T-cell (primary cell): ENCODE measurements at regions of chr2 and their contacts with region 1.

Region 1: DNA sequence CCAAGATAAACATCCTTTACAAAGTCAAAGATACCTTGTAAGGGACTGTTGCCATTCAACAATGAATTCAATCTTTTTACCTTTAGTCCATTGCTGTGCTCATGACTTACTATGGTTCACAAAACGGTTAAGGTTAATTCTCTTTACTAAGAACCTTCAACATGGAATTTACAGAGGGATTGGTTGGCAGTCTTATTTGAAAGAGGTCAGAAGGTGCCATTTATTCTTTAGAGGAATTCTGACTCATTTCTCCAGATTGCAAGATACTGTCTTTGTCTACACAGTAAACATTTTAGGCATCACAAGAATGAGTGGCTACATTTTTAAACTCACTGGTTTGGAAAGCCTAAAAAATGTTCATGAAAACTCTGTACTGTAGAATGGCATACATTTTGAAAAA is 17.4 kb downstream of the KCNH7 start:
- DNase-seq: no peak
- ATAC-seq: no peak
- H3K4me3 ChIP-seq: no peak overlapping the region
- H3K4me3 Mint-ChIP-seq: no peak overlapping the region
- H3K27ac ChIP-seq: no peak overlapping the region
- H3K27ac Mint-ChIP-seq: no peak overlapping the region
- H3K4me1 ChIP-seq: no peaks in the 10 kb centered on the region
- H3K4me1 Mint-ChIP-seq: no peaks in the 10 kb centered on the region
- H3K27me3 ChIP-seq: no peaks in the 10 kb centered on the region
- H3K27me3 Mint-ChIP-seq: no peaks in the 10 kb centered on the region

Region 2: DNA sequence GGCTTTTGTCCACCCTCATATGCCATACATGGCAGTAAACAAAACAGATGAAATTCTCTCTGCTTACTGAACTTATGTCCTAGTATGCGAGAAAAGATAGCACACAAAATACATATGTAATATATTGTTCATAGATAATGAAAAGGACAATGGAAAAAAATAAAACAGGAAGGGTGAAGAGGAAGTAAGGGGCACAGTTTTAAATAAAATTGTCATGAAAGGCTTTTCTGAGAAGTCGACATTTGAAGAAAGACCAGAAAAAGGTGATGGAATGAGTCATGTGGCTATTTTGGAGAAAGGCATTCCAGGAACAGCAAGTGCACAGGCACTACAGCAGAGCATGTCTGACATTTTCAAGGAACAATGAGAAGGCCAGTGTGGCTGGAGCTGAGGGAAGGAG is 39.0 kb before region 1 on chr2:
- CTCF ChIA-PET with region 1: no interaction called
- POLR2A ChIA-PET with region 1: interaction called in 1 of 2 experiments, 13 read pairs
- DNase-seq: no peak
- ATAC-seq: no peak
- H3K4me3 ChIP-seq: no peak overlapping the region
- H3K4me3 Mint-ChIP-seq: no peak overlapping the region
- H3K27ac ChIP-seq: no peak overlapping the region
- H3K27ac Mint-ChIP-seq: no peak overlapping the region
- H3K4me1 ChIP-seq: no peaks in the 10 kb centered on the region
- H3K4me1 Mint-ChIP-seq: no peaks in the 10 kb centered on the region
- H3K27me3 ChIP-seq: no peaks in the 10 kb centered on the region
- H3K27me3 Mint-ChIP-seq: no peaks in the 10 kb centered on the region